Activated naive CD4-positive, alpha-beta T cell treated with anti-CD3 and anti-CD28 coated beads for 36 hours (primary cell): ENCODE measurements at regions of chr16 and their contacts with region 1.

Region 1: GRCh38 chr16:89246903-89247733 is 29.6 kb downstream of the ZNF778 start:
- DNase-seq: peak; percentile 96
- H3K4me3 Mint-ChIP-seq: peak overlapping the region; percentile 77
- H3K27ac Mint-ChIP-seq: no peak overlapping the region
- H3K4me1 Mint-ChIP-seq: peaks cover 7% of the 10 kb centered on the region
- H3K27me3 Mint-ChIP-seq: no peaks in the 10 kb centered on the region

Region 2: GRCh38 chr16:89155184-89155679 is 91.9 kb before region 1 on chr16:
- CTCF ChIA-PET with region 1: no interaction called
- intact Hi-C with region 1: no loop called
- DNase-seq: no peak
- H3K4me3 Mint-ChIP-seq: no peak overlapping the region
- H3K27ac Mint-ChIP-seq: no peak overlapping the region
- H3K4me1 Mint-ChIP-seq: no peaks in the 10 kb centered on the region
- H3K27me3 Mint-ChIP-seq: no peaks in the 10 kb centered on the region

Region 3: GRCh38 chr16:89257757-89258465 is 10.8 kb after region 1 on chr16:
- CTCF ChIA-PET with region 1: interaction called, 3 read pairs
- intact Hi-C with region 1: loop called (anchors 1 kb)
- DNase-seq: no peak
- H3K4me3 Mint-ChIP-seq: peak overlapping the region; percentile 63
- H3K27ac Mint-ChIP-seq: no peak overlapping the region
- H3K4me1 Mint-ChIP-seq: peaks cover 17% of the 10 kb centered on the region
- H3K27me3 Mint-ChIP-seq: peaks cover 11% of the 10 kb centered on the region